Ascending aorta (tissue), 2 donors: ENCODE measurements at regions of chr1 and their contacts with region 1.

Region 1: DNA sequence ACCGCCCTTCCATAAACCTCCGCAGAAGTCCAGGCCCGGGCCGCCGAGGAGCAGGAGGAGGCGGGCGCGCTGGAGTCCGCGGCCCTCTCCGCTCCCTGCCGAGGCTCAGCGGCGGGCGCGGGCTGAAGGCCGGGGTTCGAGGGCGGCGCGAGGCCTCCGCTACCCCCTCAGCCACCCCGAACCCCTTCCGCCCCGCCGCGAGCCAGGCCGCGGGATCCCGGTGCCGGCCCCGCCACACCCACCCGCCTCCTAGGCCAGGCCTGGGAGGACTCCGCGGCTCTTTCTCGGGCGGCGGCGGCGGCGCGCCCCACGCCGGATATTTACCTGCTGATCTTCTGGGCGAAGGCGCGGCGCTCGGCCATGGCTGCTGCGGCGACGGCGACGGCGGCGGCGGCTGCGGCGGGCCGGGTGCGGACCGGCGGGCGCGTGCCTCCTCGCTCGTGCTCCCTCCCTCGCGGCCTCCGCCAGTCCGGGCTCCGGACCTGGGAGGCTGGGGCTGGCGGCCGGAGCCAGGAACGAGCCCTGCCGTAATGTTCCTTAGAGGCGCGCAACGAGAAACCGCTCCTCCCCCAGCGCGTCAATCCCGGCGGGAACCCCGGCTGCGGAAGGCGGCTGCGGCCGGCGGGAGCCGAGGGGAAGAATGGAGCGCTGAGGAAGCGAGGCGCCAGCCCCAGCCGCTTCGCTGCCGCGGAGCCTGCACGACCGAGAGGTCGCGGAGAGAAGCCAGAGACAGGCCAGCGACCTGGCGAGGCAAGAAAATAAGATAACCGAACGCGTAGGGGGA is at the start of gene DOCK7:
- DNase-seq: peak in 1 of 2 donors; percentile 85
- H3K4me3 ChIP-seq: peak within 1 kb of the TSS; percentile 94 to 96
- H3K27ac ChIP-seq: peak within 1 kb of the TSS; percentile 89 to 95
- H3K4me1 ChIP-seq: peaks cover 11 to 37% of the 10 kb centered on the region in 2 donors
- H3K27me3 ChIP-seq: no peaks in the 10 kb centered on the region
- CTCF ChIP-seq: no peak
- total RNA-seq, gene DOCK7: 46.0 TPM

Region 2: GRCh38 chr1:62436466-62437256 is 251.4 kb before region 1 on chr1 and contains the start of gene USP1:
- intact Hi-C with region 1: loop called (anchors 2 kb)
- DNase-seq: peak; percentile 98 to 99
- H3K4me3 ChIP-seq: peak within 1 kb of the TSS; percentile 91 to 95
- H3K27ac ChIP-seq: peak within 1 kb of the TSS; percentile 95 to 97
- H3K4me1 ChIP-seq: peaks cover 0 to 23% of the 10 kb centered on the region in 2 donors
- H3K27me3 ChIP-seq: no peaks in the 10 kb centered on the region
- CTCF ChIP-seq: no peak
- total RNA-seq, gene USP1: 19.4 TPM

Region 3: GRCh38 chr1:62585469-62586155 is 102.5 kb before region 1 on chr1:
- intact Hi-C with region 1: no loop called
- DNase-seq: no peak
- H3K4me3 ChIP-seq: no peak overlapping the region
- H3K27ac ChIP-seq: no peak overlapping the region
- H3K4me1 ChIP-seq: no peaks in the 10 kb centered on the region
- H3K27me3 ChIP-seq: no peaks in the 10 kb centered on the region
- CTCF ChIP-seq: no peak

Region 4: DNA sequence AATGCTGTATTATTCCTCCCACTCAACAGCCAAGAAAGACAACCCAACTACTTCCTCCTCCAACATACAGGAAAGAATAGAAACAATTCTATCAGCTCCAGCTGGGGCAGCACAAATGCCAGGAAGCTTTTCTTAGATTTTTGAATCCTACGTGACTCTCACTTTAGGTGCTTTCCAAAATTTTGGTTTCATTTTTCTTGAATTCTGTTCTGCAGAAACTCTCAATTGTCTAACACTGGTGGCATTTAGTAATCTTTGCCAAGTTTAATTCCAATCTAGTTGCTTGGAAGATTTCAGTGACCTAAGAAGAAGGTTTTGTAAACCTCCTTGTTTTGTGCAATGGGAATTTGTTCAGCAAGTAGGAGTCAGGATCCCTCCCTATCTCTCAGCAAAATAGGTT is 37.2 kb after region 1 on chr1:
- intact Hi-C with region 1: loop called (anchors 5 kb)
- DNase-seq: no peak
- H3K4me3 ChIP-seq: peak overlapping the region in 1 of 2 donors; percentile 46
- H3K27ac ChIP-seq: peak overlapping the region; percentile 46 to 50
- H3K4me1 ChIP-seq: peaks cover 0 to 16% of the 10 kb centered on the region in 2 donors
- H3K27me3 ChIP-seq: no peaks in the 10 kb centered on the region
- CTCF ChIP-seq: no peak

Region 5: GRCh38 chr1:62746085-62746808 is 58.2 kb after region 1 on chr1:
- intact Hi-C with region 1: loop called (anchors 5 kb)
- DNase-seq: no peak
- H3K4me3 ChIP-seq: peak overlapping the region in 1 of 2 donors; percentile 51
- H3K27ac ChIP-seq: no peak overlapping the region
- H3K4me1 ChIP-seq: peaks cover 0 to 2% of the 10 kb centered on the region in 2 donors
- H3K27me3 ChIP-seq: no peaks in the 10 kb centered on the region
- CTCF ChIP-seq: peak; percentile 40 to 72 (median 43)

Region 6: GRCh38 chr1:62783723-62784508 is 95.8 kb after region 1 on chr1 and contains the start of gene ATG4C:
- intact Hi-C with region 1: loop called (anchors 1 kb)
- DNase-seq: peak; percentile 90 to 98
- H3K4me3 ChIP-seq: peak within 1 kb of the TSS; percentile 81 to 93
- H3K27ac ChIP-seq: peak within 1 kb of the TSS; percentile 87 to 90
- H3K4me1 ChIP-seq: peaks cover 0 to 9% of the 10 kb centered on the region in 2 donors
- H3K27me3 ChIP-seq: no peaks in the 10 kb centered on the region
- CTCF ChIP-seq: no peak
- total RNA-seq, gene ATG4C: 9.7 TPM